CD4-positive, alpha-beta T cell (primary cell): ENCODE measurements at regions of chr14 and their contacts with region 1.

Region 1: GRCh38 chr14:96501742-96502617 is at the start of gene PAPOLA:
- DNase-seq: peak; percentile 90 to 99 (median 94)
- ATAC-seq: peak; percentile 87
- H3K4me3 ChIP-seq: peak within 1 kb of the TSS; percentile 80
- H3K4me3 Mint-ChIP-seq: peak within 1 kb of the TSS; percentile 97
- H3K27ac ChIP-seq: peak within 1 kb of the TSS; percentile 93 to 96
- H3K27ac Mint-ChIP-seq: peak within 1 kb of the TSS; percentile 87
- H3K4me1 ChIP-seq: peaks cover 33% of the 10 kb centered on the region
- H3K4me1 Mint-ChIP-seq: peaks cover 46% of the 10 kb centered on the region
- H3K27me3 ChIP-seq: no peaks in the 10 kb centered on the region
- H3K27me3 Mint-ChIP-seq: peaks cover 4% of the 10 kb centered on the region
- CTCF ChIP-seq: peak; percentile 17
- total RNA-seq, gene PAPOLA: 140 to 148 TPM

Region 2: DNA sequence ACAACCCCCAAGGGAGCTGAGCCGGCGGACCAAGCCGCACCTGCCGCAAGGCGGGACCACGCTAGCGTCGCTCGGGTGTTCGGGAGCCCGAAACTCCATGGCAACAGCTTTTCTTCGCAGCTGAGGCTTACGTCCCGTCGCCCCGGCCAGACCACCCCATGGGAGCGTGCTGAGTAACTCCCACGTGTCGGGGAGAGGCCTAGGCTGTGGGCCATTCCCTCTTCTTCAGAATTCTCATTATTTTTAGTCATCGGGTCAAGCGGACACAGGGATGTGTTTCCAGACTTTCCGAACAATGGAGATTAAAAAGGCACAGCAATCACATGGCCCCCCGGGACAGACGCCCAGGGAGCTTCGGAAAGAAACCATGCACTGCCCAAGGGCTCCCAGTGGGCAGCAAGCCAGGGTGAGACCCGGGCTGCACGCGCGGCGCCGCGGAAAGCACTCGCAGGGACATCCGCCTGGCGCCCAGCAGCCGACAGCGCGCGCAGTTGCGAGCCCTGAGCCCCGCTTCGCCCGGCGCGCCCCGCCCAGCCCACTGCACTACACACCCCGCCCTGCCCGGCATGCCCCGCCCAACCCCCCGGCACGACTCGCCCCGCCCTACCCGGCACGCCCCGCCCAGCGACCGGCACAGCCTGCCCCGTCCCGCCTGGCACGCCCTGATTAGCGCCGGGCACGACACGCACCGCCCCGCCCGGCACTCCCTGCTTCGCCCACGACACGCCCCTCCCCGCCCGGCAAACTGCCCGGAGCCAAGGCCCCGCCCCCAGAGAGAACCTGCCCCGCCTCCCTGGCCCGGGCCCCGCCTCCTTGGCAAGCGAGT is 110.5 kb before region 1 on chr14:
- CTCF ChIA-PET with region 1: no interaction called
- POLR2A ChIA-PET with region 1: no interaction called
- intact Hi-C with region 1: loop called in 1 of 2 experiments (anchors 2 kb)
- DNase-seq: peak; percentile 97 to 100 (median 100)
- ATAC-seq: peak; percentile 93
- H3K4me3 ChIP-seq: peak overlapping the region; percentile 88
- H3K4me3 Mint-ChIP-seq: peak overlapping the region; percentile 91
- H3K27ac ChIP-seq: peak overlapping the region in 1 of 2 donors; percentile 35
- H3K27ac Mint-ChIP-seq: peak overlapping the region; percentile 66
- H3K4me1 ChIP-seq: peaks cover 17% of the 10 kb centered on the region
- H3K4me1 Mint-ChIP-seq: peaks cover 11% of the 10 kb centered on the region
- H3K27me3 ChIP-seq: no peaks in the 10 kb centered on the region
- H3K27me3 Mint-ChIP-seq: no peaks in the 10 kb centered on the region
- CTCF ChIP-seq: no peak

Region 3: DNA sequence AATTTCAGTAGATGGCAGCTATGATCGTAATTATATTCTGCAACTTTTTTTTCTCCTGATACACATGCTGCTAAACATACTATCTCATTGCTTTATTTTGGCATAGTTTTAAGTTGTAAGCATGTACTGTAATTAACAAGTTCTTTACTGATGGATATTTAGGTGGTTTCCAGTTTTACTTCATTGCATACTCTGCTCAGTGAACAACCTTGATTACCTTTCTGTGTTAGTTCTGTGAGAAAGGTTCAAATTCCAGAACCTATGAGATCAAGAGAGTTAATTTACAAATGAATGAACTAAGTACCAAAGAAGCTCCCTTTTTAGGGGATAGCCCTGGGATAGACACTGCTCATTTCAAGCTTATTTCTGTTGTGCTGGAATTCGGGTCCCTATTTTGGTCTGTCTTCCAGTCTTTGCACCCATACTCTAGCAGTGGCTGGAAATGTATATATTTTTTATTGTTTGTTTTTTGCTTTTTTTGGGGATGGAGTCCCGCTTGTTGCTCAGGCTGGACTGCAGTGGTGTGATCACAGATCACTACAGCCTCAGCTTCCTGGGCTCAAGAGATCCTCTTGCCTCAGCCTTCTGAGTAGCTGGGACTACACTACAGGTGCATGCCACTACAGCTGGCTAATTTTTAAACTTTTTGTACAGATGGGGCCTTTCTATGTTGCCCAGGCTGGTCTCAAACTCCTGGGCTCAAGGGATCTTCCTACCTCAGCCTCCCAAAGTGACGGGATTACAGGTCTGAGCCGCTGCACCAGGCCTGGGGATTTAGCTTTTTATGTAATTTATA is 10.8 kb after region 1 on chr14:
- CTCF ChIA-PET with region 1: interaction called, 3 read pairs
- POLR2A ChIA-PET with region 1: interaction called, 8 read pairs
- intact Hi-C with region 1: loop called in 1 of 2 experiments (anchors 1 kb)
- DNase-seq: no peak
- ATAC-seq: no peak
- H3K4me3 ChIP-seq: no peak overlapping the region
- H3K4me3 Mint-ChIP-seq: peak overlapping the region; percentile 11
- H3K27ac ChIP-seq: no peak overlapping the region
- H3K27ac Mint-ChIP-seq: peak overlapping the region; percentile 10
- H3K4me1 ChIP-seq: peaks cover 33% of the 10 kb centered on the region
- H3K4me1 Mint-ChIP-seq: peaks cover 100% of the 10 kb centered on the region
- H3K27me3 ChIP-seq: no peaks in the 10 kb centered on the region
- H3K27me3 Mint-ChIP-seq: no peaks in the 10 kb centered on the region
- CTCF ChIP-seq: no peak

Region 4: DNA sequence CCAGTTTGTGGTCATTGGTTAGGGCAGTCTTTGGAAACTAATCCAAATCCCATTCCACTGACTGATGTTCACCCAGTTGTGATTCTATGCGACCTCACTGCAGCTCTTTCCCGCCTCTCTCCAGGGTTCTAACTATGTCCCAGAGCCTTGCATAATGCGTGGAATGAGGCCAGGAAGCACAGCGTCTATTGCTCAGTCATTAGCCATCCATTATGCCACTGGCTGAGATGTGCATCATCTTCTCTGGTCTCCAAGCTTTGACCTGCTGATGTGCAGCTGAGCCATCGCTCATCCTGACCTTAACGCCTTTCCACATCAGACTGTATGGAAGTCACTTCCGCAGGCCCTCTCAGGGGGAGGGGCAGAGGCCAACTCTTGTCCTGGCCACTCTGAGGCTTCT is 179.8 kb after region 1 on chr14:
- CTCF ChIA-PET with region 1: no interaction called
- POLR2A ChIA-PET with region 1: no interaction called
- intact Hi-C with region 1: no loop called
- DNase-seq: no peak
- ATAC-seq: no peak
- H3K4me3 ChIP-seq: no peak overlapping the region
- H3K4me3 Mint-ChIP-seq: no peak overlapping the region
- H3K27ac ChIP-seq: no peak overlapping the region
- H3K27ac Mint-ChIP-seq: no peak overlapping the region
- H3K4me1 ChIP-seq: no peaks in the 10 kb centered on the region
- H3K4me1 Mint-ChIP-seq: no peaks in the 10 kb centered on the region
- H3K27me3 ChIP-seq: peaks cover 4 to 10% of the 10 kb centered on the region in 2 experiments
- H3K27me3 Mint-ChIP-seq: peaks cover 53% of the 10 kb centered on the region
- CTCF ChIP-seq: no peak